ENCODE measurements at regions of chr17 and their contacts with region 1.

Region 1: GRCh38 chr17:48351831-48352332 is 78.1 kb downstream of the SKAP1 start:
- DNase-seq: no peak
- H3K4me3 ChIP-seq: no peak overlapping the region
- CTCF ChIP-seq: peak; percentile 27

Region 2: DNA sequence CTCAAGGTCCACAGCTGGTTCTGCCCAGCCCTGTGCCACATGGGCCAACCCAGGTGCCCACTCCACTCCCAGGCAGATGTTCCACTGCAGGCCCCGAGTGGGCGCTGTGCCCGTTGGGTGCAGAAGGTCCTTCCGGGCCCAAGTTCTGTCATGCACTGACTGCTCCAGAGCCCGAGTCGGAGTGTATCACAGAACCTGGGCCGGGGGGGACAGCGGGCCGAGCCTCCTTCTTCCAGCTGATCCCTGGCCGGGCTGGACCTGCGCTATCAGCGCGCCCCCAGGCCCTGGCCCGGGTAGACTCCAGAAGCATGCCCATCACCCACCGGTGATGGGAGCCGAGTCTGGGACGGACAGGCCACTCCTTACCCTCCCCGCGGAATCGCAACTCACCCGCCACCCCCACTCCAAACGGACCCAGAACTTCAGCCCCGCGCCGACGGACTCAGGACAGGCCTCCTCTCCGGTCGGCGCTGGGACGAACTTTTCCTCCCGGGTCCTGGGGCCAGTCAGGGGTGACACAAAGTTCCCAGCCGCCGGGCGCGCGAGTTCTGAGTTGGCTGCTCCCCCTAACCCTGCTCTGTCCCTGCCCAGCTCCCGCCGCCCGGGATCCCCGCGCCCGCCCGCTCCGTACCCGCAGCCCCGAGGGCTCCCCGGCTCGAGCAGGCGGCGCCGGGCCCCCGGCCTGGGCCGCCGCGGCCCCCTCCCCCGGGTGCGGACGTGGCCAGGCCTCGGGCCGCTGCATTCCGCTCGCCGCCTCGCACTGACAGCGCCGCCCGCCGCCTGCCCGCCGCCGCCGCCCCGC is 314.6 kb before region 1 on chr17 and contains the start of gene COPZ2:
- CTCF ChIA-PET with region 1: no interaction called
- POLR2A ChIA-PET with region 1: no interaction called
- DNase-seq: no peak
- H3K4me3 ChIP-seq: peak within 1 kb of the TSS; percentile 76
- CTCF ChIP-seq: peak; percentile 81

Region 3: DNA sequence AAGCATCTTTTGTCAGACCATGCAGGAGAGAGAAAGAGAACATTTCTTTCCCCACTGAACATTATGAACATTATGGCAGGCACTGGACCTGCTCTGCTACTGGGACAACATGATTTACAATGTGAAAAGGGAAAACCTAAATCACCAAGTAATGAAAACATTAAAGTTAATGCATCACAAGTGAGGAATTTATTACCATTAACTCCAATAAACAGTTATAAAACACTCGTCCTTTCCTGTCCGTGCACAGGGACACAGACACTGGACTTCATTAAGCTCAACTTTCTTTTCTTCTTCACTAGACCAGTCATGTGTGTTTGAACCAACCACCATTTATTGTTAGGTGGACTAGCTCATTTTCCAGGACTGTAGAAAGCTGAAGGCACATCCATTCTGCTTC is 148.9 kb before region 1 on chr17:
- CTCF ChIA-PET with region 1: no interaction called
- POLR2A ChIA-PET with region 1: no interaction called
- DNase-seq: no peak
- H3K4me3 ChIP-seq: no peak overlapping the region
- CTCF ChIP-seq: no peak

Region 4: DNA sequence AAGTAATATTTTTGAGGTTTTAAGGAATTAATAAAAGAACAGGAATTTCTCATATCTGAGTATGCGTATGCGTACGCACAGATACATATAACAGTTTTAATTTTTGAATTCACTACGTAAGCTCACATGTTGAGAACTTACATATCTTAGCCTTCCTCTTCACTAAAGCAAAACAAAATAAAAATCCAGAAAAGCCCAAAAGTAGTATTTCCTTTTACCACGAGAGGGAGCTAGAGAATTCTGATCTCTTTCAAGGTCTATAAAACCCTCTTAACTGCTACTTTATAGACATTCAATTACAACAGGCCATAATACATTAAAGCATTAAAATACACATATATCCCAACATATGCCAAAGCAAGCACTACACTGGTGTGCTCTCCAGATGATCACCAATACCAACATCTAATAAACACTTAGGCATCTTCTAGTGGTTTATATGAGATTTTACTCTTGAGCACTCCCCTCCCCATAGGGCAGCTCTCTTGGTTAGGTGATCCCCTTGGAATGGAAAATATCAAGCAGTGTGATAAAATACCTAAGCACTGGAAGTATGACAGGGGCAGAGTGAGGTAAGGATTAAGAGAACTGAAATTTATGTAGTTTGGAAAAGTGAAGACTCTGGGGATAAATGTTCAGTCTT is 15.9 kb before region 1 on chr17:
- CTCF ChIA-PET with region 1: interaction called, 101 read pairs
- POLR2A ChIA-PET with region 1: no interaction called
- DNase-seq: no peak
- H3K4me3 ChIP-seq: no peak overlapping the region
- CTCF ChIP-seq: peak; percentile 38

Region 5: DNA sequence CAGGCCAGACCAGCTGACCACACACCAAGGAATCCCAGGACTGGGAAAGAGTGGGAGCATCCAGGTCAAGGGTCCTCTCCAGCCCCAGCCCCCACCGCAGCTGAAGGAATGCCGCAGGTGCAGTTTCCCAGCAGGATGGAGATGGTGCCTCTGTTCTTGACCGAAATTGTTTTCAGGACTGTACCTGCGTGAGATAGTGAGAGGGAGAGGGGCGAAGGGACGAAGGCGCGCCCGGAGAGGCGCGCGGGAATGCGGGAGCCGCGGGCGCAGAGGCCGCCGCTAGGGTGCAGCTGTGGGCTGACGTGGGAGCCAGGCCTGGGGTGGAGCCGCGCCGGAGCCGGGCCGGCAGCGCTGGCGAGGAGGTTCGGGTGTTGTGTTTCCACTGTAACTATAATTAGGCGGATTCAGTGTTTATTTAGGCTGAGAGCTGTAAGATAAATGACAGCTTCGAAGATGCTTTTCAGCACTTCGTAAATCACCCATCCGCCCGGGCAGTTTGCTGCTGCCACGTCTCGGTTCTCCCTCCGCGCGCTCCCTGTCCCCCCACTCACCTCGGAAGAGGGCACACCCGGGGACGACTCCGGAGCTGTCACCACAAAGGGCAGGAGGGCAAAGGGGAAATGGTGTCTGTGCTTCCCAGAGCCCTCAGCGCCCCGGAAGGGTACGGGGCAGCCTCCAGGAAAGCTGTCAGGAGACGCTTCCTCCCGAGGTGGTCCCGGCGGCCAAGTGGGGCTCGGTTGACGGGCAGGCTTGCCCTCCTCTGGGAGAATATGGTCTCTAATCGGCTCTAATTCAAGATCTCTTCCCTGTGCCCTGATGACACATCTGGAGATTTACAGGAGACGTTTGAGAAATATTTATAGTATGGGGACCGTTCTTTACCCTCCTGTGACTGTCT is 140.8 kb after region 1 on chr17:
- CTCF ChIA-PET with region 1: interaction called, 15 read pairs
- POLR2A ChIA-PET with region 1: no interaction called
- DNase-seq: no peak
- H3K4me3 ChIP-seq: peak overlapping the region; percentile 45
- CTCF ChIP-seq: peak; percentile 90

Region 6: DNA sequence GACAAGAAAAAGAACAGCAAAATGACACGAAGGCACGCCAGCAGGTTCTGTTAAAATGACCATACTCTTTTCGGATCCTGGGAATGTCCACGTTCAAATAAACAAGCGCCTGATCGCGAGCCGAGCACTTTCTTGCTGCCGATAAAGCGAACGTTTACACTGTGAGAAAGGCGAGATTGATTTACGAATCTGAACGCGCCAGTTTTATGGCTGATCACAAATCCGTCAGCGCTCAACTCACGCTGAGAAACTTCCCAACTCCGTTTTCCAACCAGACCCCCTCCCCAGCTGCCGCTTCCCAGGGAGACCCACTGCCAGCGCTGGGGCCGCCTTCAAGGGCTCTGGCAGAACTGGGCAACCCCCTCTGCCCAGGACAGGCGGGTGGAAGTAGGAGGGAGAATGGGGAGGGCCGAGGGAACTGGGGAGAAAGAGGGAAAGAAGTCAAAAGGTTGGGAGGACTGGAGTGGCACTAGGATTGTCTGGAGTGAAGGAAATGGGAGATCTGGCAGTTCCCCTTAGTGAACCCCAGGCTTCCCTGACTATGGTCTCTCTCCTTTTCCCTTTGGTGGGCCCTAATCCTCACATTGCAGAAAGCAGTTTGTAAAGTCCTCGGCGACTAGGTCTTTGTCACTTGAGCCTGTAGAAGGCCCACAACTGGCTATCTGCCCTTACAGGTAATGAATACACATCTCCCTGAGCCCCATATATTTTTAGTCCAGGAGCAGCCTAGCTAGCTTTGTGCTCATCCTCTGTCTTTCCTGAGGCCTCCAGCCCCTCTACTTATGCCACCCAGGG is 219.3 kb after region 1 on chr17:
- CTCF ChIA-PET with region 1: interaction called, 15 read pairs
- POLR2A ChIA-PET with region 1: no interaction called
- DNase-seq: no peak
- H3K4me3 ChIP-seq: peak overlapping the region; percentile 54
- CTCF ChIP-seq: no peak

Region 7: DNA sequence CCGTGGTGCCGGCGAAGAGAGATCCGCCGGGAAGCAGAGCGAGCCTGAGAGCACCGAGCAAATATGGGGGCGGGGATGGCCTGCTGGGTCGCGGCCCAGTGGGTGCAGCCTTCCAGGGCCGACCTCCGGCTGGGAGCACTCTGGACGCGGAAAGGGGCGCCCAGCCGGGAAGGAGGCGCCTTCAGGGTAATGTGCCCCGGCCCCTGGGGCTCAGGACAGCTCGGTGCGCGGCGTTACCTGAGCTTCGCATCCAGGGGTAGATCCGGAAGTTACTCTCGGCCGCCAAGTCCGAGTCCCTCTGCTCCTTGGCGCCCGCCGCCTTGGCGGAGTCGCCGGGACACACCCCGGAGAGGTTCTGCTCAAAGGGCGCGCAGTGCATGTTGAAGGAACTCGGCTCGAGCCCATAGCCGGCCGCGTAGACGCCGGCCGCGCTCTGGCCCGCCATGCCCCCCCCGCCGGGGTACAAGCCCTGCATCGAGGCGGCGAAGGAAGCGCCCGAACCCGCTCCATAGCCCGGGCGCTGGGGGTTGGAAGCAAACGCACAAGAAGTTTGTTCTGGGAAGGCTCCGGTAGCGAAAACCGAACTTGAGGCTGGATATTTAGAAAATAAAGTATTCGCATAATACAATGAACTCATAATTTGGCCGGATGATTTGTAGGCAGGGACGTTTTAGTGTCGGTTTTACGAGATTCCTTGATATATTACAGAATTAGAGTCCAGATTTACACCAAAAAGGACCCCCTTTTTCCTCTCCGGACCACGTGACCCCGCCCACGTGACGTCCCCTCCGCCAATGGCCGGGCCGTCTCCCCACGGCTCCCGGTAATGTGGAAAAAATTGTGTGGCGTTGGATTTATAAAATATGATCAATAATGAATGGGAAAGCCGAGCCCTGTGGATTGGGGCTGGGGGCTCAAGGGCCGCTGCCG is 258.7 kb after region 1 on chr17 and contains the start of gene HOXB7:
- CTCF ChIA-PET with region 1: interaction called, 35 read pairs
- POLR2A ChIA-PET with region 1: no interaction called
- DNase-seq: no peak
- H3K4me3 ChIP-seq: peak within 1 kb of the TSS; percentile 67
- CTCF ChIP-seq: no peak

Measured in AG04449 (cell line).